Posterior cingulate gyrus (tissue), 11 donors: ENCODE measurements at regions of chr20 and their contacts with region 1.

Region 1: GRCh38 chr20:53677447-53678314 is 84.0 kb upstream of the ZNF217 start:
- DNase-seq: peak in 2 of 10 donors; percentile 18 to 23

Region 2: GRCh38 chr20:53502820-53503219 is 174.9 kb before region 1 on chr20:
- intact Hi-C with region 1: no loop called
- DNase-seq: no peak

Region 3: GRCh38 chr20:53594068-53595017 is 83.3 kb before region 1 on chr20:
- intact Hi-C with region 1: loop called (anchors 5 kb)
- DNase-seq: peak; percentile 91 to 99 (median 96)

Region 4: DNA sequence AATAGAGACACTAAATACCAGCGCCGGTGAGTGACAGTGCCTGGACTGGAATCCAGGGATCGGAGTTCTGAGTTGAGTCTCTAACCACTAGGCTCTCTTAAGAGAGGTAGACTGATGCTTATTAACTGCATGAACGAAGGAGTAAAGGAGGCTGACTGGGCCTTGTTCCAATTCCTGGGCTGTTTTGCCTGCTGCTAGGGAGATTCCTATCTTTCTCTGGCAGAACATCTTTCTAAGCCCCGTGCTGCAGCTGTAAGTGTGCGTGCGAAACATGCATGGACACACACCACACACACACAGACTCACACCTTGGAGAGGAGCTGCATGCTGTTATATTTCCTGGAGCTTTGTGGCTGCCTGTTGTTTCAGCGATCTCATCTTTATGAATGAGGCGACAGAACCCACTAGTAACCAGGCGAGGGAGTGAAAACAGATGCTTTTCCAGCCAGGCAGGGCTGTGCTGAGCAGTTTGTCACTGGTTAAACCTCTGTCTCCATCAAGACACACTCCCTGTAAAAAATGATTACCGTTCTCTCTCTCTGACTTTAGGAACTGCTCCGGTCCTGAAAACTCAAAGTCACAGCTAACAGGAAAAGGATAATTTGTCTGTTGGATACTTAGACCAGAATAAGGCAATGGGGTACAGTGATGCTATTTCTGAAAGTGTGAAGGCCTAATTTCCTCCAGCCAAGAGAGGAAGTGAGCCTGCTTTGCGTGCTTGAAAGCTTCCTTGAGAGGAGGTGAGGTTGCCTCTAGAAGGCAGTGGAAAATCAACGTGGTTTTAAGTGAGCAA is 73.3 kb after region 1 on chr20:
- intact Hi-C with region 1: no loop called
- DNase-seq: peak in 5 of 10 donors; percentile 15 to 82 (median 27)